ENCODE measurements at regions of chr11 and their contacts with region 1.

Region 1: DNA sequence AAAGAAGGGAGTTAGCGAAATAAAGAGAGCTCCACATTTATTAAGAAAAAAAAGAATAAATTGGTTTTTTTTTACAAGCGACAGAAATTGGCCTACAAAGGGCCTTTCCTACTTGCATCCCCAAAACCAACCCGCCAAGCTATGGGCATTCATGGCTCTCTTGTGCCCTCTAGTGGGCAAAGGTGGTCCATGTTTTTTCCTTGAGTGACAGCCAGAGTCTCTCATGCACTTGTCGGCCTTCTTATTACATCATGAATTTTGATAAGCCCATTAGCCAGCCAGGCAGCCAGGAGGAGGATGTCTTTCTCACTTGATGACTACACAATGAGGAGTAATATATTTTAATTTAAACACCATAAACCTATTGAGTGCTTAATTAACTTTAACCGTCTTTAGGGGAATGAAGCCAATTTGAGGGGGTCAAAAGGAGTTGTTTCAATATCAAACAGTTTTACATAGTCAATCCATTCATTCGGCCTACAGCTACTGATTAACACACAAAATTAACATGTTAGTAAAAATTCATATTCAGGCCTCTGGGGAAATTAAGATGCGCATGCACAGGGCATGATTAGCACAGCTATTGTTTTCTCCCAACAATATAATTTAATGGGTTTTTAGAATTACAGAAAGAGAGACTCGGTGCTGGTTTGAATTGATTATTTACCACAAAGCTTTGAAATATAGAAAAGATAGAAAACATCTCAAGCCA is 85.5 kb downstream of the RCN1 start:
- DNase-seq: peak; percentile 10
- H3K4me3 ChIP-seq: no peak overlapping the region
- CTCF ChIP-seq: peak; percentile 79

Region 2: GRCh38 chr11:31107062-31107461 is 1069.3 kb before region 1 on chr11:
- CTCF ChIA-PET with region 1: interaction called, 16 read pairs
- POLR2A ChIA-PET with region 1: no interaction called
- DNase-seq: no peak
- H3K4me3 ChIP-seq: no peak overlapping the region
- CTCF ChIP-seq: peak; percentile 54

Region 3: DNA sequence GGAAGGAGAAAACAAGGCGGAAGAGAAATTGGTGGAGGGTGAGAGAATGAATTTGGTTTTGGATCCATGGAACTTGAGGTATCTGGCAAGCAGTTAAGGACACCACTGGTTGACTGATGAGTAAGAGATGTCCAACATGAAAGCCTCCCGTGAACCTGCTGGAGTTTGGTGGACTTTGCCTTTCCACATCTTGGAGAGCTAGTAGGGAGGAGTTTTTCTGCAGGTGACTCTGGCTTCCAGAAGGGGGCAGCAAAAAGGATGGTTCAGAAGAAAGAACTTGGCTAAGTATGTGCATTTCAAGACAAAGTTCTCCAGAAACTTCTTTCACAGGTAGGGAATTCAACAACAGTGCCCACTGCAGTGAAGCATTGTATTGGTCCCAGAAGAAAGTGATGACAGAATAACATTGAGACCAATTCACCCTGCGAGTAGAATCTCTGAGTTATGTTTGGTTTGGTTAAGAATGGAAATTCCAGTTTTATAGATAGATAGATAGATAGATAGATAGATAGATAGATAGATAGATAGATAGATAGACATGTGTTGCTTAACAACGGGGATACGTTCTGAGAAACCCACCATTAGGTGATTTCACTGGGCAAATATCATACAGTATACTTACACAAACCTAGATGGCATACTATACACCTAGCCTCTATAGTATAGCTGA is 835.3 kb before region 1 on chr11:
- CTCF ChIA-PET with region 1: interaction called, 10 read pairs
- POLR2A ChIA-PET with region 1: no interaction called
- DNase-seq: no peak
- H3K4me3 ChIP-seq: no peak overlapping the region
- CTCF ChIP-seq: peak; percentile 51

Region 4: DNA sequence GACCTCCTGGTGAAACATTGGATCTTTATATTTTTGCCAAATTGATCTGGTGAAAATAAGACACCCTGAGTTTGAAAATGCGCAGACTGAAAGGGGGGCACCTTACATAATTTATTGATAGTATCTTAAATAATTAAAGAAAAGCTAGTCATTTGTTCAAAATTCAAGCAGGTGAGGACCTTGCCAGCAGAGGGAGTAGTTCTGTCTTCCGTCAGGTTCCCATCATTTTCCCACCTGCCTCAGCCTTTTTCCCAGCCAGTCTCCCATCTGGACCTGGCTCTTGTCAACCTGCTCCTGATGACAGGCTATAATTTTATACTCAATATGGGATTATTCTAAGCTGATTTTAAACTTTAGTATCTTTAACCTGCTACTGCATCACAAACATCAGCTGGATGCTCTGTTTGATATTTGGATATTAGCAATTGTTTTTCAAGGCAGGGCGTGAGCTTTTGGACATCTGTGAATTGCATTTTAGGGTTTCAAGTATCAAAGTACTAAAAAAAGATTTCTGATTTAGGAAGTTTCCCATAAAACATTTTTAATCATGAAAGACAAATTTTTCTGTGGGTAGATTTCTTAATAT is 534.8 kb before region 1 on chr11:
- CTCF ChIA-PET with region 1: interaction called, 13 read pairs
- POLR2A ChIA-PET with region 1: no interaction called
- DNase-seq: no peak
- H3K4me3 ChIP-seq: no peak overlapping the region
- CTCF ChIP-seq: peak; percentile 48

Region 5: DNA sequence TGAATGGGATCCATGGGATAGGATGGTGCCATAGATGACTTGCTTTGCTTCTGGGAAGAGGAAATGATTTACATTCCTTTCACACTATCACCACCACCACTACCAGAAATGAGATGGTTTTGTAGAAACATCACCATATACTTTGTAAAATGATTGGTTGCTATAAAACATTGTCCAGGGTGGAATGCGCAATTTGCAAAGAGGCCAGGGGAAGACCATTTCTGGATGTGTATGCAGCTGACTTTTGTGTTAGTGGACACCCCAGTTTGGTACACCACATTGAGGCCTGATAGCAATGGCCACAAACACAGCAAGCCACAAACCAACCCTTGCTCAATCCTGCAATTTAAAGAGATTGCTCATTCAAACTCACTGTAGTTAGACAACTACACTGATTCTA is 142.2 kb before region 1 on chr11:
- CTCF ChIA-PET with region 1: interaction called, 27 read pairs
- POLR2A ChIA-PET with region 1: no interaction called
- DNase-seq: peak; percentile 100
- H3K4me3 ChIP-seq: no peak overlapping the region
- CTCF ChIP-seq: no peak

Region 6: GRCh38 chr11:32071811-32072210 is 104.6 kb before region 1 on chr11:
- CTCF ChIA-PET with region 1: interaction called, 15 read pairs
- POLR2A ChIA-PET with region 1: no interaction called
- DNase-seq: no peak
- H3K4me3 ChIP-seq: no peak overlapping the region
- CTCF ChIP-seq: peak; percentile 52

Region 7: GRCh38 chr11:32154275-32154674 is 22.1 kb before region 1 on chr11:
- CTCF ChIA-PET with region 1: interaction called, 157 read pairs
- POLR2A ChIA-PET with region 1: no interaction called
- DNase-seq: no peak
- H3K4me3 ChIP-seq: no peak overlapping the region
- CTCF ChIP-seq: no peak

Measured in AG04449 (cell line).